ENCODE measurements at regions of chr3 and their contacts with region 1.

Region 1: GRCh38 chr3:197501879-197502620 is 53.7 kb downstream of the BDH1 start:
- DNase-seq: peak; percentile 45 to 76
- H3K4me3 ChIP-seq: no peak overlapping the region
- H3K4me1 ChIP-seq: no peaks in the 10 kb centered on the region; the same call in 1 of the 2 replicates
- H3K27me3 ChIP-seq: no peaks in the 10 kb centered on the region

Region 2: GRCh38 chr3:197002701-197003454 is 499.2 kb before region 1 on chr3:
- in situ Hi-C with region 1: loop called (anchors 25 kb)
- DNase-seq: peak; percentile 64 to 84
- H3K4me3 ChIP-seq: peak overlapping the region; percentile 33
- H3K4me1 ChIP-seq: peaks cover 7% of the 10 kb centered on the region
- H3K27me3 ChIP-seq: no peaks in the 10 kb centered on the region

Region 3: DNA sequence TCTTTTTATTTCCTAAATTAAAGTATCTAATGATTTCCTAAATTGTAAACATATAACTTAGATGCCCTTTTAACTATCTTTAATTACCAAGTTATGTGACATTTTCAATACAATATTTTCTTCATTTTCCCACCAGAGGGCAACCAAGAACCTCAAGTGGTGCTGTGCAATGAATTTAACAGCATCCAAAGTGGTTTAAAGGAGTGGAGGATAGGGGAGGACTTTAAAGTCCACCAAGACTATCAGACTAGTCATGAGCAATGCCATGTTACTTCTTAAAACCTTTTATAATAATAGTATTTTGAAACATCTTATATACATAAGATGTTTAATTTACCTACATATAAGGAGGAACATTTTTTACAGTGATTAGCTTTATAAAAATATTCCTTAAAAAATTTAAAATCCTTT is 278.0 kb before region 1 on chr3:
- in situ Hi-C with region 1: loop called (anchors 10 kb)
- DNase-seq: peak in 1 of 2 experiments; percentile 68
- H3K4me3 ChIP-seq: no peak overlapping the region
- H3K4me1 ChIP-seq: no peaks in the 10 kb centered on the region
- H3K27me3 ChIP-seq: no peaks in the 10 kb centered on the region

Region 4: DNA sequence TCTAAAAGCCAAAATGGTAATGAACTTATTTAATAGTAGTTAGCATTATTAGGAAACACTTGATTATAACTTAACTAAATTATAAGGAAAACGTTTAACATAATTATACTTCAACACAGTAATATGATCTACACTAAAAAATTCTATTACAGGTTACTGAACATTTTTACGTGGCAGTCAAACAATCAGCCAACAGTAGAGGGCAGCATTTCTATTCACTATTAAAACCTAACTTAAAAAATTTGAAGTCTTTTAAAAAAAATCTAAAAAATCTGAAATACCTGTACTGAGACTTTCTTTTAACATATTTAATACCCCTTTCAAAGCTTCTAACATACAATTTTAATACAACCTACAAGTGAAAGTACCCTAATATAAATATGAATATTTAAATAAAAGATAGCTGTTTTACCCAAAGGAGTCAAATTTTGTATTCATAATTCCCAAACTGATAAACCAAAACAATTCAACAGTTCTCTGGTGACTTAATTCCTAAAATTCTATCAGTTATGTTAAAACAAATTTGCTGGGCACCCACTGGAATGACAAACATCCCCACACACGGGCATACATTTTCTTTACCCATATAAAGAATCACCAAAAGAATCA is 245.1 kb before region 1 on chr3:
- in situ Hi-C with region 1: loop called (anchors 10 kb)
- DNase-seq: peak; percentile 25 to 40
- H3K4me3 ChIP-seq: no peak overlapping the region
- H3K4me1 ChIP-seq: peaks cover 8% of the 10 kb centered on the region
- H3K27me3 ChIP-seq: no peaks in the 10 kb centered on the region

Measured in HAP-1 (cell line).